ENCODE measurements at regions of chr9 and their contacts with region 1.

Region 1: DNA sequence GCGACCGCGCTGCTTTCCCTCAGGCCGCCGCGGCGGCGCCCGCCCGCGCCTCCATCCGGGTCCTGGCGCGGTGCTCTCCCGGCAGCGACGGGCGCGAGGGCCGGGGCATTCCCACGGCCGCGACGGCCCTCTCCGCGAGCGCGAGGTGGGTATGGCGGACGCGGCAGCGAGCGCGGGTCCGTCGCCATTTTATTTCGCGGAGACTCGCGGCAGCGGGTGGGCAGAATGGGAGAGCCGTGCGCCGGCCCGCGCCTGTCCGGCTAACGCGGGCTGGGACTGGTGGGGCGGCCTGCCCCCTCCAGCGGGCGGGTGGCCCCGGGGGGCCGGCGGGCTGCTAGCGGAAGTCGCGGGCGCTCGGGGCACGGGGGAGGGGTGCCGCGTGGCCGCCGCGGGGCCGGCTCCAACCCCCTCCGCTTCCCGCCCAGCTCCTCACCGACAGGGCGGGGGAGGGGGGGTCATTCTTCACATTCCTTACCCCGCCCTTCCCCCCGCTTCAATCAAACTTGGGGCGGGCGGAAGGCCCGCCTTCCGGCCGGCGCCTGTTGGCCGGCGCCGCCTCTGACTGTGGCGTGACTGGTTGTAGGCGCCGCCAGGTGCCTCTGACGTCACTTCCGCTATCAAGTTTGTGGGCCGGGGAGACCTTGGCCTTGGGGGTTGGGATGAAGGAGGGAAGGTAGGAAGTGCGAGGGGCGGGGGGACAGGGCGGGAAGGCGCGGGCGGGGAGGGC is 82.1 kb downstream of the PTPDC1 start:
- DNase-seq: peak; percentile 97
- ATAC-seq: peak; percentile 65
- H3K4me3 Mint-ChIP-seq: peak overlapping the region; percentile 89
- H3K27ac Mint-ChIP-seq: peak overlapping the region; percentile 91
- H3K4me1 Mint-ChIP-seq: peaks cover 34% of the 10 kb centered on the region
- H3K27me3 Mint-ChIP-seq: no peaks in the 10 kb centered on the region

Region 2: GRCh38 chr9:92669890-92670708 is 1496.3 kb before region 1 on chr9 and contains the start of gene IPPK:
- CTCF ChIA-PET with region 1: no interaction called
- POLR2A ChIA-PET with region 1: interaction called, 4 read pairs
- intact Hi-C with region 1: loop called in 1 of 2 experiments (anchors 2 kb)
- DNase-seq: peak; percentile 99
- ATAC-seq: peak; percentile 94
- H3K4me3 Mint-ChIP-seq: peak within 1 kb of the TSS; percentile 96
- H3K27ac Mint-ChIP-seq: peak within 1 kb of the TSS; percentile 93
- H3K4me1 Mint-ChIP-seq: peaks cover 33% of the 10 kb centered on the region
- H3K27me3 Mint-ChIP-seq: no peaks in the 10 kb centered on the region
- total RNA-seq, gene IPPK: 9.9 to 12.2 TPM

Region 3: GRCh38 chr9:94030318-94031179 is 135.9 kb before region 1 on chr9:
- CTCF ChIA-PET with region 1: no interaction called
- POLR2A ChIA-PET with region 1: no interaction called
- intact Hi-C with region 1: loop called (anchors 1 kb)
- DNase-seq: peak; percentile 89
- ATAC-seq: peak; percentile 100
- H3K4me3 Mint-ChIP-seq: peak overlapping the region; percentile 98
- H3K27ac Mint-ChIP-seq: peak overlapping the region; percentile 96
- H3K4me1 Mint-ChIP-seq: peaks cover 15% of the 10 kb centered on the region
- H3K27me3 Mint-ChIP-seq: peaks cover 3% of the 10 kb centered on the region

Region 4: GRCh38 chr9:94213511-94214124 is 47.2 kb after region 1 on chr9:
- CTCF ChIA-PET with region 1: interaction called, 6 read pairs
- POLR2A ChIA-PET with region 1: no interaction called
- intact Hi-C with region 1: loop called in 1 of 2 experiments (anchors 1 kb)
- DNase-seq: peak; percentile 84
- ATAC-seq: peak; percentile 99
- H3K4me3 Mint-ChIP-seq: peak overlapping the region; percentile 26
- H3K27ac Mint-ChIP-seq: peak overlapping the region; percentile 55
- H3K4me1 Mint-ChIP-seq: peaks cover 3% of the 10 kb centered on the region
- H3K27me3 Mint-ChIP-seq: peaks cover 13% of the 10 kb centered on the region

Region 5: GRCh38 chr9:95317119-95317892 is 1150.9 kb after region 1 on chr9 and contains the start of gene FANCC:
- CTCF ChIA-PET with region 1: no interaction called
- POLR2A ChIA-PET with region 1: no interaction called
- intact Hi-C with region 1: loop called in 1 of 2 experiments (anchors 5 kb)
- DNase-seq: peak; percentile 90
- ATAC-seq: peak; percentile 84
- H3K4me3 Mint-ChIP-seq: peak within 1 kb of the TSS; percentile 85
- H3K27ac Mint-ChIP-seq: peak within 1 kb of the TSS; percentile 95
- H3K4me1 Mint-ChIP-seq: peaks cover 15% of the 10 kb centered on the region
- H3K27me3 Mint-ChIP-seq: peaks cover 7% of the 10 kb centered on the region
- total RNA-seq, gene FANCC: 15.9 to 16.7 TPM

Measured in activated CD4-positive, alpha-beta T cell treated with anti-CD3 and anti-CD28 coated beads for 36 hours (primary cell).